ENCODE measurements at regions of chr20 and their contacts with region 1.

Region 1: GRCh38 chr20:44310664-44311639 is at the start of gene FITM2:
- DNase-seq: peak; percentile 93 to 99 (median 96)
- ATAC-seq: peak; percentile 92 to 98 (median 95)
- H3K4me3 ChIP-seq: peak within 1 kb of the TSS; percentile 68 to 95
- H3K4me3 Mint-ChIP-seq: peak within 1 kb of the TSS; percentile 86 to 92 (median 91)
- H3K27ac ChIP-seq: peak within 1 kb of the TSS; percentile 5
- H3K27ac Mint-ChIP-seq: peak within 1 kb of the TSS; percentile 83 to 87
- H3K4me1 ChIP-seq: peaks cover 7 to 23% of the 10 kb centered on the region in 2 experiments
- H3K4me1 Mint-ChIP-seq: peaks cover 20 to 29% (median 24%) of the 10 kb centered on the region in 3 donors
- H3K27me3 ChIP-seq: peaks cover 0 to 3% of the 10 kb centered on the region in 2 experiments
- H3K27me3 Mint-ChIP-seq: no peaks in the 10 kb centered on the region
- total RNA-seq, gene FITM2: 4.5 to 7.4 (median 6.2) TPM

Region 2: GRCh38 chr20:44211177-44212039 is 99.5 kb before region 1 on chr20:
- CTCF ChIA-PET with region 1: interaction called, 111 to 246 read pairs
- POLR2A ChIA-PET with region 1: interaction called, 3 to 7 read pairs
- DNase-seq: peak in 8 of 35 experiments; percentile 14 to 49 (median 25)
- ATAC-seq: peak in 1 of 4 experiments; percentile 0
- H3K4me3 ChIP-seq: peak overlapping the region; percentile 78 to 81
- H3K4me3 Mint-ChIP-seq: peak overlapping the region; percentile 96 to 99 (median 97)
- H3K27ac ChIP-seq: peak overlapping the region; percentile 87
- H3K27ac Mint-ChIP-seq: peak overlapping the region; percentile 99
- H3K4me1 ChIP-seq: peaks cover 28 to 33% of the 10 kb centered on the region in 2 experiments
- H3K4me1 Mint-ChIP-seq: peaks cover 73 to 77% (median 77%) of the 10 kb centered on the region in 3 donors
- H3K27me3 ChIP-seq: no peaks in the 10 kb centered on the region
- H3K27me3 Mint-ChIP-seq: no peaks in the 10 kb centered on the region

Region 3: GRCh38 chr20:44264287-44264686 is 46.7 kb before region 1 on chr20:
- CTCF ChIA-PET with region 1: no interaction called
- POLR2A ChIA-PET with region 1: no interaction called
- DNase-seq: no peak
- ATAC-seq: no peak
- H3K4me3 ChIP-seq: no peak overlapping the region
- H3K4me3 Mint-ChIP-seq: no peak overlapping the region
- H3K27ac ChIP-seq: no peak overlapping the region
- H3K27ac Mint-ChIP-seq: no peak overlapping the region
- H3K4me1 ChIP-seq: no peaks in the 10 kb centered on the region
- H3K4me1 Mint-ChIP-seq: peaks cover 0 to 17% (median 0%) of the 10 kb centered on the region in 3 donors
- H3K27me3 ChIP-seq: no peaks in the 10 kb centered on the region
- H3K27me3 Mint-ChIP-seq: no peaks in the 10 kb centered on the region

Region 4: DNA sequence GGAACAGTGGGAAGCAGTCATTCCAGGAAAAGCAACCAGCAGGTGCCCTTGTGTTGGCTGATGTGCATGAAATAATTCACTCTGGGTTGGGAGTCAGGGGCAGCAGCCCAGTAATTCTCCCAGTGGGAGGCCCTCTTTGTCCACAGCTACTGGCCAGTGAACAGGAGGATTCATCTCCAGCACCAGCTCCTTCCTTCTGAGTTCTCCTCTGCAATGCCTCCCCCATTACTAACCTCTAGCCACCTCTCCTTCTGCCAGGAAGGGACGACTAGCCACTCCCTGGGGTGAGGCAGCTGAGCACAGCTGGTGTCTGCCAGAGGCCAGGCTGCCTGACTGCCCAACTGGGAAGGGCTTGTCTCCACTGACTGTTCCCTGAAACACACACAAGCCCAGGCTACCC is 13.4 kb after region 1 on chr20:
- CTCF ChIA-PET with region 1: interaction called, 8 to 12 read pairs
- POLR2A ChIA-PET with region 1: interaction called in 1 of 2 experiments, 4 read pairs
- DNase-seq: no peak
- ATAC-seq: no peak
- H3K4me3 ChIP-seq: no peak overlapping the region
- H3K4me3 Mint-ChIP-seq: no peak overlapping the region
- H3K27ac ChIP-seq: no peak overlapping the region
- H3K27ac Mint-ChIP-seq: no peak overlapping the region
- H3K4me1 ChIP-seq: peaks cover 0 to 6% of the 10 kb centered on the region in 2 experiments
- H3K4me1 Mint-ChIP-seq: peaks cover 0 to 2% (median 0%) of the 10 kb centered on the region in 3 donors
- H3K27me3 ChIP-seq: peaks cover 0 to 23% of the 10 kb centered on the region in 2 experiments
- H3K27me3 Mint-ChIP-seq: peaks cover 0 to 6% of the 10 kb centered on the region in 2 donors

Region 5: GRCh38 chr20:44615169-44615791 is 304.3 kb after region 1 on chr20:
- CTCF ChIA-PET with region 1: interaction called in 1 of 2 experiments, 3 read pairs
- POLR2A ChIA-PET with region 1: interaction called in 1 of 2 experiments, 12 read pairs
- DNase-seq: peak in 10 of 35 experiments; percentile 6 to 40 (median 20)
- ATAC-seq: peak in 3 of 4 experiments; percentile 13 to 46 (median 31)
- H3K4me3 ChIP-seq: peak overlapping the region in 1 of 2 donors; percentile 27
- H3K4me3 Mint-ChIP-seq: peak overlapping the region in 2 of 3 donors; percentile 31 to 80
- H3K27ac ChIP-seq: peak overlapping the region; percentile 52
- H3K27ac Mint-ChIP-seq: peak overlapping the region; percentile 92 to 93
- H3K4me1 ChIP-seq: peaks cover 26 to 69% of the 10 kb centered on the region in 2 experiments
- H3K4me1 Mint-ChIP-seq: peaks cover 73 to 76% (median 73%) of the 10 kb centered on the region in 3 donors
- H3K27me3 ChIP-seq: no peaks in the 10 kb centered on the region
- H3K27me3 Mint-ChIP-seq: no peaks in the 10 kb centered on the region

Measured in T-cell (primary cell).